Activated B cell treated with CpG ODN at 0.5 μM for 24 hours (primary cell): ENCODE measurements at regions of chr12 and their contacts with region 1.

Region 1: GRCh38 chr12:94660436-94660835 is 10.1 kb upstream of the TMCC3 start:
- DNase-seq: no peak
- ATAC-seq: no peak
- H3K4me3 Mint-ChIP-seq: no peak overlapping the region
- H3K27ac Mint-ChIP-seq: no peak overlapping the region
- H3K4me1 Mint-ChIP-seq: peaks cover 12% of the 10 kb centered on the region
- H3K27me3 Mint-ChIP-seq: no peaks in the 10 kb centered on the region
- CTCF ChIP-seq: no peak

Region 2: GRCh38 chr12:94596596-94596995 is 63.8 kb before region 1 on chr12:
- CTCF ChIA-PET with region 1: no interaction called
- POLR2A ChIA-PET with region 1: no interaction called
- intact Hi-C with region 1: no loop called
- DNase-seq: no peak
- ATAC-seq: no peak
- H3K4me3 Mint-ChIP-seq: no peak overlapping the region
- H3K27ac Mint-ChIP-seq: no peak overlapping the region
- H3K4me1 Mint-ChIP-seq: peaks cover 21% of the 10 kb centered on the region
- H3K27me3 Mint-ChIP-seq: no peaks in the 10 kb centered on the region
- CTCF ChIP-seq: no peak

Region 3: GRCh38 chr12:94640134-94640928 is 20.1 kb before region 1 on chr12:
- CTCF ChIA-PET with region 1: no interaction called
- POLR2A ChIA-PET with region 1: no interaction called
- intact Hi-C with region 1: no loop called
- DNase-seq: no peak
- ATAC-seq: peak; percentile 30
- H3K4me3 Mint-ChIP-seq: no peak overlapping the region
- H3K27ac Mint-ChIP-seq: peak overlapping the region; percentile 47
- H3K4me1 Mint-ChIP-seq: peaks cover 31% of the 10 kb centered on the region
- H3K27me3 Mint-ChIP-seq: no peaks in the 10 kb centered on the region
- CTCF ChIP-seq: no peak

Region 4: DNA sequence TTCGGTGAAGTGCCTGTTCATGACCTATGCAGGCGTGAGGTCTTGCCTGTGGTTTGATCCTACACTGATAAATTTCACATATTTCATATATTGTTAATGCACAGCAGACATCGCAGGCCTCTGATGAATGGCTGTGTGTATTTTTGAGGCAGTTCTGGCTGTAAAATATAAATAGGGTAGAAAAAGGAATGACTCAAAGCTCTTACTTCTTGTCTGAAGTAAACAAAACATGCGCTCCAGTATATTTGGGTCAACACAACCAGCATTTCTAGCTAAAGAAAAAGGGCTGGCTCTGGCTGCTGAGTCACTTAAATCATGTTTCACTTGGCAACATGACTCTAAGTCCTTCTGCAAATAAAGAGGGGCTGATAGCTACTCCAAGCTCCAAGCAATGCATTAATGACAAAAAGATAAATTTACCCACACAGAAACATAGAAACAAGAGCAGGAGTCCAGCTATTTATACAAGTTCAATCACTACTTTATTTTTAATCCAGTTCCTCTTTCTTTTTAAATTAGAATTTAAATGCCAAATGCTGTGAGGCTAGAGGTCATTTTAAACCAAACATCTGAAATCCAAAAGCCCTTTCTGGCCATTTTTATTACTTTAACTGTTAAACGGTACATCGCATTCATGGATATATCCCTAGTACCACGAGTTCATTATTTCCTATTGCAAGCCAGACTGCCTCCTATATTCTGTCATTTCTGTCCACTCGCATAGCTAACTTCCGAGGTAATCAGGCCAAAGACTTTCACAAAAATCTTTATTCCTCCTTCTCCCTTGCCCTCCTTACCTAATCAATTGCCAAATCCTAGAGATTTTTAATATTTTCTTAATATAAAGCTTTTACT is 44.2 kb after region 1 on chr12:
- CTCF ChIA-PET with region 1: no interaction called
- POLR2A ChIA-PET with region 1: no interaction called
- intact Hi-C with region 1: loop called (anchors 5 kb)
- DNase-seq: no peak
- ATAC-seq: no peak
- H3K4me3 Mint-ChIP-seq: no peak overlapping the region
- H3K27ac Mint-ChIP-seq: no peak overlapping the region
- H3K4me1 Mint-ChIP-seq: peaks cover 73% of the 10 kb centered on the region
- H3K27me3 Mint-ChIP-seq: no peaks in the 10 kb centered on the region
- CTCF ChIP-seq: no peak

Region 5: GRCh38 chr12:94789510-94790225 is 129.2 kb after region 1 on chr12:
- CTCF ChIA-PET with region 1: no interaction called
- POLR2A ChIA-PET with region 1: interaction called, 12 read pairs
- intact Hi-C with region 1: no loop called
- DNase-seq: no peak
- ATAC-seq: no peak
- H3K4me3 Mint-ChIP-seq: no peak overlapping the region
- H3K27ac Mint-ChIP-seq: no peak overlapping the region
- H3K4me1 Mint-ChIP-seq: peaks cover 45% of the 10 kb centered on the region
- H3K27me3 Mint-ChIP-seq: no peaks in the 10 kb centered on the region
- CTCF ChIP-seq: no peak